ENCODE measurements at regions of chr11 and their contacts with region 1.

Region 1: GRCh38 chr11:65859200-65859811 is 927 bp upstream of the MUS81 start:
- DNase-seq: peak; percentile 89 to 98 (median 92)
- H3K4me3 ChIP-seq: peak overlapping the region; percentile 55 to 81
- H3K4me3 Mint-ChIP-seq: peak overlapping the region; percentile 93 to 99 (median 96)
- H3K27ac ChIP-seq: peak overlapping the region; percentile 85
- H3K27ac Mint-ChIP-seq: peak overlapping the region; percentile 92 to 99 (median 97)
- H3K4me1 ChIP-seq: peaks cover 58% of the 10 kb centered on the region
- H3K4me1 Mint-ChIP-seq: peaks cover 32 to 64% (median 48%) of the 10 kb centered on the region in 4 donors
- H3K27me3 ChIP-seq: no peaks in the 10 kb centered on the region
- H3K27me3 Mint-ChIP-seq: no peaks in the 10 kb centered on the region

Region 2: GRCh38 chr11:64971421-64972233 is 887.7 kb before region 1 on chr11 and contains the start of gene MAJIN:
- CTCF ChIA-PET with region 1: no interaction called
- POLR2A ChIA-PET with region 1: no interaction called
- intact Hi-C with region 1: no loop called
- DNase-seq: peak; percentile 85 to 90 (median 87)
- H3K4me3 ChIP-seq: peak within 1 kb of the TSS in 1 of 2 donors; percentile 20
- H3K4me3 Mint-ChIP-seq: peak within 1 kb of the TSS; percentile 73 to 83 (median 75)
- H3K27ac ChIP-seq: peak within 1 kb of the TSS; percentile 15
- H3K27ac Mint-ChIP-seq: peak within 1 kb of the TSS; percentile 50 to 90 (median 77)
- H3K4me1 ChIP-seq: peaks cover 11% of the 10 kb centered on the region
- H3K4me1 Mint-ChIP-seq: peaks cover 7 to 25% (median 18%) of the 10 kb centered on the region in 4 donors
- H3K27me3 ChIP-seq: no peaks in the 10 kb centered on the region
- H3K27me3 Mint-ChIP-seq: no peaks in the 10 kb centered on the region
- total RNA-seq, gene MAJIN: 0.44 to 0.91 TPM

Region 3: GRCh38 chr11:65180877-65181568 is 678.3 kb before region 1 on chr11:
- CTCF ChIA-PET with region 1: no interaction called
- POLR2A ChIA-PET with region 1: no interaction called
- intact Hi-C with region 1: no loop called
- DNase-seq: peak; percentile 48 to 70 (median 54)
- H3K4me3 ChIP-seq: peak overlapping the region; percentile 61 to 70
- H3K4me3 Mint-ChIP-seq: peak overlapping the region; percentile 89 to 93 (median 90)
- H3K27ac ChIP-seq: peak overlapping the region; percentile 52
- H3K27ac Mint-ChIP-seq: peak overlapping the region in 6 of 7 donors; percentile 79 to 94 (median 87)
- H3K4me1 ChIP-seq: peaks cover 36% of the 10 kb centered on the region
- H3K4me1 Mint-ChIP-seq: peaks cover 11 to 37% (median 22%) of the 10 kb centered on the region in 4 donors
- H3K27me3 ChIP-seq: no peaks in the 10 kb centered on the region
- H3K27me3 Mint-ChIP-seq: no peaks in the 10 kb centered on the region

Region 4: DNA sequence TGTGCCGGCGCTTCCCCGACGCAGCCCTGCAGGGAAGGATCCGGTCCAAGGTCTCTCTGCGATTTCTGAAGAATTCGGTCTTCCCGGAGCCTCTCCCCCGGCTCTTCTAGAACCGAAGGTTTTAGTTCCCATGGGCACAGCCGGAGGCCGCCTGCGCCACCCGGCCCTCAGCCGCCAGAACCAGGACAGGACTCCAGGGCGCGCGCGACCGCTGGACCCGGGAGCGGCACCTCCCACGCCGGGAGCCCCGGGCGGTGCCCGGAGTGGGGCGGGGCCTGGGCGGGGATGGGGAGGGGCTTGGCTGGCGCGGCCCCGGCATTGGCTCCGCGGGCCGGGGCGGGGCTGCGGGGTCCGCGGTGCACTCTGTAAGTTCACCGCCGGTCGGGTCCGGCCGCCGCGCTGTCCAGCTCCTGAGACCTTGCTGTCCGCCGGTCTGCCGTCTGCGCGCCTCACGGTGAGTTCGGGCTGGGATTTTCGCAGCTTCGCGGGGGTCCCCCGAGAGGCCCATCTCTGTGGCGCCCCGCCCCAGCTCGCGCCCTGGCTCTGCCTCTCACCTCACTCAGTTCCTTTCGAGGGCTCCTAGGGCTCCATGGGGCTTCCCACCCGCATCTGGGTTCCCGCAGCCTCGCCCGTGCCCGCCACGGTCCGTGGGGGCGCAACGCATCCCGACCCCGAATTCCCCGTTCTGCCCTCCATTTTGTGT is 544.7 kb before region 1 on chr11 and contains the start of gene CDC42EP2:
- CTCF ChIA-PET with region 1: no interaction called
- POLR2A ChIA-PET with region 1: no interaction called
- intact Hi-C with region 1: no loop called
- DNase-seq: peak; percentile 51 to 71 (median 58)
- H3K4me3 ChIP-seq: peak within 1 kb of the TSS; percentile 73 to 74
- H3K4me3 Mint-ChIP-seq: peak within 1 kb of the TSS; percentile 72 to 83 (median 76)
- H3K27ac ChIP-seq: peak within 1 kb of the TSS; percentile 49
- H3K27ac Mint-ChIP-seq: peak within 1 kb of the TSS in 1 of 7 donors; percentile 44
- H3K4me1 ChIP-seq: peaks cover 15% of the 10 kb centered on the region
- H3K4me1 Mint-ChIP-seq: peaks cover 4 to 14% (median 7%) of the 10 kb centered on the region in 4 donors
- H3K27me3 ChIP-seq: no peaks in the 10 kb centered on the region
- H3K27me3 Mint-ChIP-seq: no peaks in the 10 kb centered on the region
- total RNA-seq, gene CDC42EP2: 0.55 to 0.67 TPM

Region 5: DNA sequence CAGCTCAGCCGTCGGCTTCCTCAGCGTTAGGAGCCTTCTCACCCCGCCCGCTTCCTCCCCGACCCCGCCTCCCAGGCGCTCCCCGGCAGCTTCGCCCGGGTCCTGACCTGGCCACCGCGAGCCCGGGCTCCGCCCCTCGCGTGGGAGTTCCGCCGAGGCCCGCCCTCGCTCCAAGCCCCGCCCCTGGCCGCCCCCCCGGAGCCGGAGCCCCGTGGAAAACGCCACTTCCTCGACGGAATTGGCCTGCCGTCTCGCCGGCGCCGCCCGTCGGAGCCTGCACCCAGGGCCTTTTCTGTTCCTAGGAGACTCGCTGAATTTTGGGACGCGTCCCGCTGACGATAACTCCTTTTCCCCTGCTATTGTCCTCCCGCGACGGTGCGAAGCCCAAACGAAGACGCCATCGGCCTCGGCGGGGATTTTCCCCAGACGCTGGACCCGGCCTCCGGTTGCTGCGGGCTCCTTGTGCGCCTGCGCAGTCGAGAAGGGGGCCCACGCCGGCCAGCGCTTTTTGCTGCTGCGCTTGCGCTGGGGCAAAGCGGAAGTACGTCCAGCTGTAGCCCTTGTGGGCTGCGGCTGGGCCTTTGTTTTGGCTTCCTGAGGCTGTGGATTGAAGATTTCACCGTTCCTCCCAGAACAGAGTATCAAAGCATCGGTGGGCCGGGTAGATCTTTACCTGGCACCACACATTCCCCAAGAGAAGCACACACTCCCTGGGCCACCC is 206.6 kb before region 1 on chr11:
- CTCF ChIA-PET with region 1: no interaction called
- POLR2A ChIA-PET with region 1: interaction called, 10 read pairs
- intact Hi-C with region 1: no loop called
- DNase-seq: peak; percentile 95 to 99 (median 97)
- H3K4me3 ChIP-seq: peak overlapping the region; percentile 50 to 64
- H3K4me3 Mint-ChIP-seq: peak overlapping the region; percentile 88 to 95 (median 91)
- H3K27ac ChIP-seq: peak overlapping the region; percentile 91
- H3K27ac Mint-ChIP-seq: peak overlapping the region; percentile 96 to 99 (median 98)
- H3K4me1 ChIP-seq: peaks cover 35% of the 10 kb centered on the region
- H3K4me1 Mint-ChIP-seq: peaks cover 34 to 59% (median 48%) of the 10 kb centered on the region in 4 donors
- H3K27me3 ChIP-seq: no peaks in the 10 kb centered on the region
- H3K27me3 Mint-ChIP-seq: no peaks in the 10 kb centered on the region

Region 6: GRCh38 chr11:65790649-65791630 is 68.4 kb before region 1 on chr11:
- CTCF ChIA-PET with region 1: no interaction called
- POLR2A ChIA-PET with region 1: no interaction called
- intact Hi-C with region 1: no loop called
- DNase-seq: no peak
- H3K4me3 ChIP-seq: no peak overlapping the region
- H3K4me3 Mint-ChIP-seq: peak overlapping the region in 1 of 8 donors; percentile 26
- H3K27ac ChIP-seq: no peak overlapping the region
- H3K27ac Mint-ChIP-seq: no peak overlapping the region
- H3K4me1 ChIP-seq: peaks cover 30% of the 10 kb centered on the region
- H3K4me1 Mint-ChIP-seq: peaks cover 4 to 38% (median 18%) of the 10 kb centered on the region in 4 donors
- H3K27me3 ChIP-seq: peaks cover 20% of the 10 kb centered on the region
- H3K27me3 Mint-ChIP-seq: peaks cover 16 to 18% of the 10 kb centered on the region in 2 donors

Region 7: GRCh38 chr11:65833297-65834030 is 25.8 kb before region 1 on chr11 and contains the start of gene SNX32:
- CTCF ChIA-PET with region 1: interaction called, 18 read pairs
- POLR2A ChIA-PET with region 1: interaction called, 72 read pairs
- intact Hi-C with region 1: loop called (anchors 1 kb)
- DNase-seq: peak; percentile 91 to 94 (median 93)
- H3K4me3 ChIP-seq: peak within 1 kb of the TSS; percentile 31 to 67
- H3K4me3 Mint-ChIP-seq: no peak within 1 kb of the TSS
- H3K27ac ChIP-seq: peak within 1 kb of the TSS; percentile 17
- H3K27ac Mint-ChIP-seq: peak within 1 kb of the TSS in 5 of 7 donors; percentile 29 to 82 (median 70)
- H3K4me1 ChIP-seq: peaks cover 20% of the 10 kb centered on the region
- H3K4me1 Mint-ChIP-seq: peaks cover 8% of the 10 kb centered on the region in 4 donors
- H3K27me3 ChIP-seq: no peaks in the 10 kb centered on the region
- H3K27me3 Mint-ChIP-seq: no peaks in the 10 kb centered on the region
- total RNA-seq, gene SNX32: 0.42 to 0.64 TPM

Region 8: DNA sequence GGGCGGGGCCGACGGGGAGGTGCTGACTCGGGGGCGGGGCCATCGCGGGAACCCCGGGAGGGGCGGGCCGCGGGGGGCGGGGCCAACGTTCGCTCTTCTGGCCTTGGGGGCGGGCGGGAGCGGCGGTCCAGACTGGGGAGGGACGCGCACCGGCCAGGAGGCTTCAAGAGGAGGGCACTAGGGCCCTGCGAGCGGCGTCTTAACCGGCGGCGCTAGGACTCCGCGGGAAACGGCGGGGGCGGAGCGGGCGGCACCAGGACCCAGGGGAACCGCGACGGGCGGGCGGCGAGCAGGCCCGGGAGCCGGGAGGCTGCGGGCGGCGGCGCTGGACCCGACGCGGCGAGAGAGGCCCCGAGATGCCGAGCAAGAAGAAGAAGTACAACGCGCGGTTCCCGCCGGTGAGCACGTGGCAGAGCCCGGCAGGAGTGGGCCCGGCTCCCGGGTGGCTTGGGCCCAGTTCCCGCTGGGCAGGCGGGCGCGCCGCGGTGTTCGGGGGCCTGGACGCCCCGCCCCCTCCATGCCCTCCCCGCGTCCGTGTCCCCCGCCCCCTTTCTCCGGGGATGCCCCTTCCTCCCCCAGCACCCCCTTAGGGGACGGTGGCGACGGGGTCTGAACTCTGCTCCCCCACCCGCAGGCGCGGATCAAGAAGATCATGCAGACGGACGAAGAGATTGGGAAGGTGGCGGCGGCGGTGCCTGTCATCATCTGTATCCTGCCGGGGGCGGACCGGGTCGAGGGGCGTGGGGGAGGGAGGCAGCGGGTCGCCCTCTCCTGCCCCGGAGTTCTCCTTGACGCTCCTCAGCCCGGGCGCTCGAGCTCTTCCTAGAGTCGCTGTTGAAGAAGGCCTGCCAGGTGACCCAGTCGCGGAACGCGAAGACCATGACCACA is 60.1 kb after region 1 on chr11 and contains the start of gene DRAP1:
- CTCF ChIA-PET with region 1: interaction called, 8 read pairs
- POLR2A ChIA-PET with region 1: interaction called, 39 read pairs
- intact Hi-C with region 1: loop called (anchors 1 kb)
- DNase-seq: peak; percentile 97 to 99 (median 98)
- H3K4me3 ChIP-seq: peak within 1 kb of the TSS; percentile 76 to 89
- H3K4me3 Mint-ChIP-seq: peak within 1 kb of the TSS; percentile 89 to 95 (median 92)
- H3K27ac ChIP-seq: peak within 1 kb of the TSS; percentile 86
- H3K27ac Mint-ChIP-seq: peak within 1 kb of the TSS; percentile 89 to 95 (median 93)
- H3K4me1 ChIP-seq: peaks cover 52% of the 10 kb centered on the region
- H3K4me1 Mint-ChIP-seq: peaks cover 15 to 63% (median 39%) of the 10 kb centered on the region in 4 donors
- H3K27me3 ChIP-seq: no peaks in the 10 kb centered on the region
- H3K27me3 Mint-ChIP-seq: no peaks in the 10 kb centered on the region
- total RNA-seq, gene DRAP1: 78.2 to 78.7 TPM

Region 9: GRCh38 chr11:66001942-66002647 is 142.8 kb after region 1 on chr11 and contains the starts of genes BANF1 and EIF1AD:
- CTCF ChIA-PET with region 1: interaction called, 11 read pairs
- POLR2A ChIA-PET with region 1: interaction called, 34 read pairs
- intact Hi-C with region 1: loop called (anchors 1 kb)
- DNase-seq: peak; percentile 95 to 97 (median 96)
- H3K4me3 ChIP-seq: peak within 1 kb of the TSS; percentile 68 to 82
- H3K4me3 Mint-ChIP-seq: peak within 1 kb of the TSS; percentile 94 to 100 (median 99)
- H3K27ac ChIP-seq: peak within 1 kb of the TSS; percentile 87
- H3K27ac Mint-ChIP-seq: peak within 1 kb of the TSS; percentile 96 to 99 (median 99)
- H3K4me1 ChIP-seq: peaks cover 26% of the 10 kb centered on the region
- H3K4me1 Mint-ChIP-seq: peaks cover 12 to 49% (median 27%) of the 10 kb centered on the region in 4 donors
- H3K27me3 ChIP-seq: no peaks in the 10 kb centered on the region
- H3K27me3 Mint-ChIP-seq: no peaks in the 10 kb centered on the region
- total RNA-seq, gene BANF1: 90.8 to 92.9 TPM
- total RNA-seq, gene EIF1AD: 60.2 to 65.4 TPM

Measured in CD4-positive, alpha-beta memory T cell (primary cell).